Mucosa of descending colon (tissue), 3 donors: ENCODE measurements at regions of chr10 and their contacts with region 1.

Region 1: DNA sequence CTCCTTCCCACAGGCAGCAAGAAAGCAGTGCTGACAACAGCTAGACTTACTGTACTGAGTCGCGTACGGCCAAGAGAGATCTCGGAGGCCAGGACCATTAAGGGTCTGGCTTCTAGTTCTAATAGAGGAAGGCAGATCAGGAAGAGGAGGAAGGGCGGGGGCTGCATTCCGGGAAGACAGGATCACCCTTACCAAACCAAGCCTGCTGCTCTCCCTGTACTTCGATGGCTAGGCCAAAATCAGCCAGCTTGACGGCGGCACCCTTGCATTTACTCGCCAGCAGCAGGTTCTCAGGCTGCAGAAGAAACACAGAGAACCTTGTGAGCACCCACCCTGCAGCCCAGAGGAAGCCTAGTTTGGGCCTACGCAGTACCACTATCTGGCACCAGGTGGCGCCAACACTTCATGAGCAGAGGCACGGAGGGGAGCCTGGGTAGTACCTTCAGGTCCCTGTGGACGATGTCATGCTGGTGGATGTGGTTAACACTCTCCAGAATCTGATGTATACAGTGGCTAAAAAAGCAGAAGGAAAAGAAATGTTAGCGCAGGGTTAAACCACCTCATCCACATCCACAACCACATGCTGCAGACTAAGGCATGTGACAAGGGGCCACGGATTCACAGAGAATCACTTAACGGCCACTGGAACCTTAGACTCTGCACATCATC is 25.4 kb downstream of the CAMK2G start:
- DNase-seq: peak; percentile 84 to 93 (median 91)
- ATAC-seq: peak; percentile 97
- H3K4me3 ChIP-seq: no peak overlapping the region
- H3K4me1 ChIP-seq: no peaks in the 10 kb centered on the region
- CTCF ChIP-seq: peak; percentile 98

Region 2: GRCh38 chr10:73743905-73744663 is 104.9 kb before region 1 on chr10 and contains the start of gene SEC24C:
- intact Hi-C with region 1: no loop called
- DNase-seq: peak; percentile 97 to 98 (median 97)
- ATAC-seq: peak; percentile 98
- H3K4me3 ChIP-seq: peak within 1 kb of the TSS; percentile 65
- H3K4me1 ChIP-seq: peaks cover 26% of the 10 kb centered on the region
- CTCF ChIP-seq: no peak
- total RNA-seq, gene SEC24C: 64.5 to 73.6 (median 71.2) TPM

Region 3: DNA sequence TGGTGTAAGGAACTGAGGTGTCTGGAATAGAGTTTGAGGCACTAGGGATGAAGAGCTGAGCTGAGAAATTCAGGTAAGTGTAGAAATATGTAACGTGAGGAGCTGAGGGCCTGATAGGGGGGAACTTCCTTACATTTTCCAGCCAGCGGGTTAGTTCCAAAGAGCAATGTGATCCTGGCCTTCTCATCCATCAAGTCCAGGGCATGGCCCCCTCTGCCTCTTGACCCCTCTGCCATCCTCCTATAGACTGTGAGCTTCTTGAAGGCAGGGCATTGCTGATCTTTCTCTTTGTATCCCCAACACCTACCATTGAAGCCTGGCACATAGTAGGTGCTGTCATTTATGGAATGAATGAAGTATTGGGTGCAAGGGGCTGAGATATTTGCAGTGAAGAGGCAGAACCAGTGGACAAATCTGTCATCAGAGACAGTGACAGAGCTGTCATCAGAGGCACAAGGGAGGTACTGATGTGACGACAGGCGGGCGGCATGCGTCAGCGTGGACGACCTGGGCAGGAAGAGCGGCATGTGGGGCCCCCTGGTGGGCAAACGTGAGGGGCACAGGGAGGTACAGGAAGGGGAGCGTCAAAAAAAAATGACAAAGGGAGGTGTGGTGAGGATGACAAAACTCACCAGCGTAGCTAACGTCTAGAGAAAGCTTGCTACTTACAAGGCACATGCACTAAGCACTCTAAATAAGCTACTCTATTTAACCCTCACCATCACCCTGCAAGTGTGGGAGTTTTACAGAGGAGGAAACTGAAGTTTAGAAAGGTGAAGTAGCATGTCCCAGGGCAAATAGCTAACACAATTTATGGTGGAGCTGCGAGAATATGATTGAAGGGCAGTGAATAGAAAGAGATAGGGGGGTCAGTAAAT is 30.6 kb after region 1 on chr10:
- intact Hi-C with region 1: loop called (anchors 2 to 5 kb)
- DNase-seq: peak; percentile 92 to 94 (median 93)
- ATAC-seq: peak; percentile 98
- H3K4me3 ChIP-seq: no peak overlapping the region
- H3K4me1 ChIP-seq: peaks cover 4% of the 10 kb centered on the region
- CTCF ChIP-seq: peak; percentile 82